ENCODE measurements at regions of chr5 and their contacts with region 1.

Region 1: GRCh38 chr5:62448528-62448927 is 36.0 kb downstream of the IPO11 start:
- DNase-seq: no peak
- ATAC-seq: no peak
- H3K4me3 ChIP-seq: no peak overlapping the region
- H3K27ac ChIP-seq: no peak overlapping the region
- H3K4me1 ChIP-seq: no peaks in the 10 kb centered on the region
- H3K27me3 ChIP-seq: no peaks in the 10 kb centered on the region
- CTCF ChIP-seq: no peak
- POLR2A ChIP-seq: no peak
- RAD21 ChIP-seq: no peak

Region 2: DNA sequence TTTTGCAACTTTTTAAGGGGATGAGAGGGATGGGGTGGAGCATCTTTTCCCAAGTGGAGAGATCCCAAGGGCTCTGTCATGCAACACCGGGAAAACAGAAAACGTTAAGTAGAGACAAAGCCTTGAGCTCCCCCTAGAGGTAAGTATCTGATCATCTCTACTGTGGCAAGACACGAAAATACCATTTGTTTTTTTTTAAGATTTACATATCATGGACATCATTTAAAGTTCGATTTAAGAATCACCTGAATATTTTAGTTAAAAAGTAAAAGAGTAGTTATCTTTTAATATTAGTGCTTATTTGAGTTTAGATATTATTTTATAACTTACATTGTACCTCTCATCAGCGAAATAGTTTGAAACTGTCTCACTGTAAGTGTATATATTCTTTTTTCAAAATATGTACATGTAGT is 330.5 kb after region 1 on chr5:
- CTCF ChIA-PET with region 1: interaction called, 4 read pairs
- POLR2A ChIA-PET with region 1: no interaction called
- dilution Hi-C with region 1: no loop called
- in situ Hi-C with region 1: no loop called
- intact Hi-C with region 1: loop called (anchors 1 kb)
- DNase-seq: peak; percentile 60
- ATAC-seq: peak; percentile 92
- H3K4me3 ChIP-seq: no peak overlapping the region
- H3K27ac ChIP-seq: no peak overlapping the region
- H3K4me1 ChIP-seq: no peaks in the 10 kb centered on the region
- H3K27me3 ChIP-seq: no peaks in the 10 kb centered on the region
- CTCF ChIP-seq: peak; percentile 81
- POLR2A ChIP-seq: no peak
- RAD21 ChIP-seq: peak; percentile 75

Region 3: GRCh38 chr5:62969409-62970120 is 521.0 kb after region 1 on chr5:
- CTCF ChIA-PET with region 1: no interaction called
- POLR2A ChIA-PET with region 1: no interaction called
- dilution Hi-C with region 1: no loop called
- in situ Hi-C with region 1: no loop called
- intact Hi-C with region 1: no loop called
- DNase-seq: no peak
- ATAC-seq: no peak
- H3K4me3 ChIP-seq: no peak overlapping the region
- H3K27ac ChIP-seq: no peak overlapping the region
- H3K4me1 ChIP-seq: no peaks in the 10 kb centered on the region
- H3K27me3 ChIP-seq: no peaks in the 10 kb centered on the region
- CTCF ChIP-seq: no peak
- POLR2A ChIP-seq: no peak
- RAD21 ChIP-seq: no peak

Region 4: GRCh38 chr5:63963080-63963735 is 1514.7 kb after region 1 on chr5:
- CTCF ChIA-PET with region 1: no interaction called
- POLR2A ChIA-PET with region 1: no interaction called
- dilution Hi-C with region 1: no loop called
- in situ Hi-C with region 1: no loop called
- intact Hi-C with region 1: loop called (anchors 5 kb)
- DNase-seq: peak; percentile 52
- ATAC-seq: peak; percentile 48
- H3K4me3 ChIP-seq: no peak overlapping the region
- H3K27ac ChIP-seq: no peak overlapping the region
- H3K4me1 ChIP-seq: no peaks in the 10 kb centered on the region
- H3K27me3 ChIP-seq: no peaks in the 10 kb centered on the region
- CTCF ChIP-seq: peak; percentile 67
- POLR2A ChIP-seq: no peak
- RAD21 ChIP-seq: peak; percentile 45

Measured in IMR-90 (cell line).